ENCODE measurements at regions of chr1 and their contacts with region 1.

Region 1: DNA sequence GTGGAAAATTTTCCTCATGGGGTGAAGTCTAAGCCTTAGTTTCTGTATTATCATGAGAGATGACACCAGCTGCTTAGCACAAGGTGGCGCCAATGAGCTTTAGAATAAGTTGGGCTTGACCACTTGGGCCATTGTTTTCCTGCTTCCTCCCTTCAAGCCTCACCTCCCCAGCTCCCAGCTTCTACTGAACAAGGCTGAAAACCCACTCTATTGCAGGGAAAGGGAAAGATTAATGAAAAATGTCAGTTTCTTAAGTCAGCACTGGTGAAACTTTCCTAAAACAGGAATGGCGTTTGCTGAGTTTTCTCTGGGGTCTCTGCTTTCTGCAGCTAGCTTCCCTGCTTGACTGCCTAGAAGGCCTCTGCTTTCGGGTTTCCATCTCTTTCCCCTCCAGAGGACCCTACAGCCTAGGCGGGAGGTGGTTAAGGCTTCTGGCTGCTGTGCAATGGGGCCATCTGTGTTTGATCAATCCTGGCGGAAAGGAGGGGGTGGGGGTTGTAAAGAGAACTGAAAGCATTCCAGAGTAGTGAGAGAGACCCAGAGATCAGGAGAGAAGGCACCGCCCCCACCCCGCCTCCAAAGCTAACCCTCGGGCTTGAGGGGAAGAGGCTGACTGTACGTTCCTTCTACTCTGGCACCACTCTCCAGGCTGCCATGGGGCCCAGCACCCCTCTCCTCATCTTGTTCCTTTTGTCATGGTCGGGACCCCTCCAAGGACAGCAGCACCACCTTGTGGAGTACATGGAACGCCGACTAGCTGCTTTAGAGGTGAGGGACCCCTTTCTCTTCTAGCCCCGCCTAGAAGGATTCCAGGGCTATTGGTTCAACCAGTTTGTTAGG is at the start of gene OLFML3:
- DNase-seq: peak in 5 of 9 donors; percentile 11 to 28 (median 17)
- ATAC-seq: peak; percentile 60
- H3K4me3 ChIP-seq: no peak within 1 kb of the TSS
- H3K4me3 Mint-ChIP-seq: no peak within 1 kb of the TSS
- H3K27ac ChIP-seq: no peak within 1 kb of the TSS
- H3K27ac Mint-ChIP-seq: peak within 1 kb of the TSS in 7 of 9 donors; percentile 31 to 48 (median 40)
- H3K4me1 ChIP-seq: peaks cover 0 to 11% of the 10 kb centered on the region in 2 donors
- H3K4me1 Mint-ChIP-seq: peaks cover 24 to 49% (median 35%) of the 10 kb centered on the region in 7 donors
- H3K27me3 ChIP-seq: no peaks in the 10 kb centered on the region
- H3K27me3 Mint-ChIP-seq: no peaks in the 10 kb centered on the region
- total RNA-seq, gene OLFML3: 0.24 to 1.8 (median 1.1) TPM

Region 2: DNA sequence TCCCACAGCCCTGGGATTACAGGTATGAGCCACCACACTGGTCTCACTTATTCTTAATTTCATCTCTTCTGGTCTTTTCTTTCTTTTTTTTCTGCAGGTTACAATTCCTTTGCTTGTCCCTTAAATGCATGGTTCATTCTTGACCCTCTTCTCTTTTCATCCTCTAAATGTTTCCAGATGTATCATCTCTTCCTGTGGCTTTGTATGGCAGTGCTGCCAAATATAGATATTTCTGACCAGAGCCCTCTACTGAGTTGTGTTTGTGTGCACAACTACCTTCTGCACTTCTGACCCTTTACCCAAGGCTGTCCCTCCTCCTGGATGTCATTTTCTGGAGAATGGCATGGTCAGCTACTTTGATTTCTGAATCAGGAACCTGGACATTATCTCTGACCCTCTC is 32.7 kb after region 1 on chr1:
- CTCF ChIA-PET with region 1: no interaction called
- POLR2A ChIA-PET with region 1: no interaction called
- intact Hi-C with region 1: no loop called
- DNase-seq: no peak
- ATAC-seq: no peak
- H3K4me3 ChIP-seq: no peak overlapping the region
- H3K4me3 Mint-ChIP-seq: no peak overlapping the region
- H3K27ac ChIP-seq: no peak overlapping the region
- H3K27ac Mint-ChIP-seq: no peak overlapping the region
- H3K4me1 ChIP-seq: no peaks in the 10 kb centered on the region
- H3K4me1 Mint-ChIP-seq: no peaks in the 10 kb centered on the region
- H3K27me3 ChIP-seq: no peaks in the 10 kb centered on the region
- H3K27me3 Mint-ChIP-seq: peaks cover 0 to 19% (median 9%) of the 10 kb centered on the region in 5 donors

Region 3: DNA sequence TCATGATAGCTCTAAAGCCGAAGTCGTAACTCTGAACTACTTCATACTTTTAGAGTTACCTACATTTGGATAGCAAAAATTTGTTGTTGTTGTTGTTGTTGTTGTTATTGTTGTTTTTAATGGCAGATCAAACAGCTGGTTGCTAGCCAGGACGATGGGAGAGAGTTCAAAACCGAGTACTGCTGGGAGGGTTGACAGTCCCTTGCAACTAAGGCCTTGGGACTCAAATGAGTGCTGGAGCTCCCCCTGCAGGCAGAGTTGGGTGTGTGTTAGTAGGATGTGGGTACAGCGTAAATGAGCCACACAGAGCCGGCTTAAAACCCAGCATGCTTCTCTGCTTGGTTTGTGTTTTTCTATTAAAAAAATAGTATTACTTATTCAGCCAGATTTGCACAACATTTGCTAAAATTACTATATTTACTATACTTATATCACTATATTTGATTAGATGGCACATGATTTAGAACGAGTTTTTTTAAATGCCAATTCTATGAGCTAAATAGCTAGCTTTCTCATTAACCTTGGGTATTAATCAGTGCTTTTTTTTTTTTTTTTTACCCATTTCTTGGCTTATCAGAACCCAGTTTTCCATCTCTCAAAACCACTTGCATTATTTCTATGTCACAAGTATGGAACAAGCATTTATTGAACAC is 303.8 kb after region 1 on chr1:
- CTCF ChIA-PET with region 1: interaction called, 7 read pairs
- POLR2A ChIA-PET with region 1: no interaction called
- intact Hi-C with region 1: loop called (anchors 1 to 2 kb)
- DNase-seq: peak; percentile 65 to 84 (median 78)
- ATAC-seq: peak; percentile 99
- H3K4me3 ChIP-seq: no peak overlapping the region
- H3K4me3 Mint-ChIP-seq: no peak overlapping the region
- H3K27ac ChIP-seq: no peak overlapping the region
- H3K27ac Mint-ChIP-seq: no peak overlapping the region
- H3K4me1 ChIP-seq: no peaks in the 10 kb centered on the region
- H3K4me1 Mint-ChIP-seq: peaks cover 0 to 9% (median 0%) of the 10 kb centered on the region in 7 donors
- H3K27me3 ChIP-seq: no peaks in the 10 kb centered on the region
- H3K27me3 Mint-ChIP-seq: peaks cover 0 to 25% (median 0%) of the 10 kb centered on the region in 5 donors

Region 4: GRCh38 chr1:114428083-114428749 is 449.1 kb after region 1 on chr1:
- CTCF ChIA-PET with region 1: no interaction called
- POLR2A ChIA-PET with region 1: no interaction called
- intact Hi-C with region 1: loop called in 1 of 2 experiments (anchors 1 kb)
- DNase-seq: peak in 6 of 9 donors; percentile 8 to 26 (median 16)
- ATAC-seq: no peak
- H3K4me3 ChIP-seq: no peak overlapping the region
- H3K4me3 Mint-ChIP-seq: no peak overlapping the region
- H3K27ac ChIP-seq: no peak overlapping the region
- H3K27ac Mint-ChIP-seq: no peak overlapping the region
- H3K4me1 ChIP-seq: no peaks in the 10 kb centered on the region
- H3K4me1 Mint-ChIP-seq: peaks cover 0 to 6% (median 0%) of the 10 kb centered on the region in 7 donors
- H3K27me3 ChIP-seq: no peaks in the 10 kb centered on the region
- H3K27me3 Mint-ChIP-seq: no peaks in the 10 kb centered on the region

Region 5: GRCh38 chr1:114558544-114558943 is 579.5 kb after region 1 on chr1:
- CTCF ChIA-PET with region 1: no interaction called
- POLR2A ChIA-PET with region 1: no interaction called
- intact Hi-C with region 1: loop called in 1 of 2 experiments (anchors 5 kb)
- DNase-seq: peak in 4 of 9 donors; percentile 16 to 39 (median 25)
- ATAC-seq: no peak
- H3K4me3 ChIP-seq: no peak overlapping the region
- H3K4me3 Mint-ChIP-seq: no peak overlapping the region
- H3K27ac ChIP-seq: no peak overlapping the region
- H3K27ac Mint-ChIP-seq: no peak overlapping the region
- H3K4me1 ChIP-seq: no peaks in the 10 kb centered on the region
- H3K4me1 Mint-ChIP-seq: peaks cover 0 to 3% (median 0%) of the 10 kb centered on the region in 7 donors
- H3K27me3 ChIP-seq: no peaks in the 10 kb centered on the region
- H3K27me3 Mint-ChIP-seq: no peaks in the 10 kb centered on the region